ENCODE measurements at regions of chr1 and their contacts with region 1.

Region 1: GRCh38 chr1:88877382-88877825 is 14.0 kb downstream of the GTF2B start:
- DNase-seq: no peak
- CTCF ChIP-seq: peak; percentile 49

Region 2: DNA sequence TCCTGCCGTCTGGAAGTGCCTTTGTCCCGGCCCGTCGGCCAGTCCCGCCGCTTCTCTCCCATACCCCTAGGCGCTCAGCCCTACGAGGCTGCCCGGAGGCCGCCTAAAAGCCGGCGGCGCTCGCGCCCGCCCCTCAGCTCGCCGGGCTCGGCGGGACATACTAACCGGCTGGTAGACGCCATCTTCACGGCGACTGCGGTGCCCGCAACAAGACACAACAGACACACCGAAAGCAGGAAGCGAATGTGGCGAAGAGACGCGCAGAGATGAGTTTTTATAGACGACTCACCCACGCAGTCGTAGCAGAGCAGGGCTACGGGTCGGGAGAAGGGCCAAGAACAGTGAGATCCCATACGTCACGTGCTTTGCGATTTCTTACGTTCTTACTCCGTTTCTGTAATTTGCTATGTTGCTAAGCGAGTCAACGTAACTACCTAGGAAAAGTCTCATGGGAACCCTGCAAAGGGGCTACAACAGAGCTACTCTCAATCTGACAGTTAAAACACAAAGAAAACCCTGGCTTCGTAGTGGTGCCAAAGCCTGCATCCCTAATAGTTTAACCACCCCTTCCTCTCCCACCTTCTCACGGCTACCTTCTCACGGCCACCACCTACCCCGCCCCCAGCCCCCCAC is 14.0 kb after region 1 on chr1 and contains the start of gene GTF2B:
- CTCF ChIA-PET with region 1: interaction called, 67 read pairs
- POLR2A ChIA-PET with region 1: interaction called, 8 read pairs
- DNase-seq: peak; percentile 85
- CTCF ChIP-seq: no peak

Measured in GM10248 (cell line).